PC-9 (cell line): ENCODE measurements at regions of chr11 and their contacts with region 1.

Region 1: DNA sequence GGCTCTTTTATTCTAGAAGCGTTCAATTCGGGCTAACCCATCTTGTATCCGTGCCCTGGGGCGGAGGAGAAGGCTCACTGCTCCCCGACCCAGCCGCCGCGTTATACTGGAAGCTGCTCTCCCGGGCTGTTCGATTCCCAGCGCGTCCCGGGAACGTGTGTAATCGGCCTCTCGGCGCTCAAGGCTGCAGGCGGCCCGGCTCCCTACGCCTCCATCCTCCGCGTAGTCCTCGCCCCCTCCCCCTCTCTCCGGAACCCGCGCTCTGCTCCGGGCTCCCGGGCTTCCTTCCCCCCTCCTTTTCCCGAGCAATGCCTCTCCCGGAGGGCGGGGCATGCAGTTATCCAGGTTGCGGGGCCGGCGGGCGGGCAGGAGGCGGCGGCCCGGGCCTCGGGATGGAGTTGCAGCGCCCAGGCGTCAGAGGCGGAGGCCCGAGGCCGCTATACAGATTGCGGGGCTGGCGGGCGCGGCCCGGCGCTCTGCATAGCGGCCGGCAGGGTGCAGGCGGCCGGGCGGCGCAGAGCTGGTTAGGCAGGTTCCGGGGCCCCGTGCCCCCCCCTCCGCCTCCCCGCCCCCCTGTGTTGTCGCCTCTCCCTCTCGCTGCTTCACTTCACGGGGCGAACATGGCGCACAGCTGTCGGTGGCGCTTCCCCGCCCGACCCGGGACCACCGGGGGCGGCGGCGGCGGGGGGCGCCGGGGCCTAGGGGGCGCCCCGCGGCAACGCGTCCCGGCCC is at the start of gene KMT2A:
- DNase-seq: peak; percentile 90 to 98
- H3K4me3 ChIP-seq: peak within 1 kb of the TSS; percentile 69
- H3K27ac ChIP-seq: peak within 1 kb of the TSS; percentile 60
- H3K4me1 ChIP-seq: peaks cover 41% of the 10 kb centered on the region
- H3K27me3 ChIP-seq: no peaks in the 10 kb centered on the region
- CTCF ChIP-seq: no peak
- total RNA-seq, gene KMT2A: 78.7 and 80.3 TPM in 2 replicates

Region 2: GRCh38 chr11:118088477-118088920 is 347.6 kb before region 1 on chr11:
- CTCF ChIA-PET with region 1: no interaction called
- POLR2A ChIA-PET with region 1: no interaction called
- intact Hi-C with region 1: no loop called
- DNase-seq: peak; percentile 46 to 89
- H3K4me3 ChIP-seq: no peak overlapping the region
- H3K27ac ChIP-seq: no peak overlapping the region
- H3K4me1 ChIP-seq: peaks cover 21% of the 10 kb centered on the region
- H3K27me3 ChIP-seq: no peaks in the 10 kb centered on the region
- CTCF ChIP-seq: no peak

Region 3: DNA sequence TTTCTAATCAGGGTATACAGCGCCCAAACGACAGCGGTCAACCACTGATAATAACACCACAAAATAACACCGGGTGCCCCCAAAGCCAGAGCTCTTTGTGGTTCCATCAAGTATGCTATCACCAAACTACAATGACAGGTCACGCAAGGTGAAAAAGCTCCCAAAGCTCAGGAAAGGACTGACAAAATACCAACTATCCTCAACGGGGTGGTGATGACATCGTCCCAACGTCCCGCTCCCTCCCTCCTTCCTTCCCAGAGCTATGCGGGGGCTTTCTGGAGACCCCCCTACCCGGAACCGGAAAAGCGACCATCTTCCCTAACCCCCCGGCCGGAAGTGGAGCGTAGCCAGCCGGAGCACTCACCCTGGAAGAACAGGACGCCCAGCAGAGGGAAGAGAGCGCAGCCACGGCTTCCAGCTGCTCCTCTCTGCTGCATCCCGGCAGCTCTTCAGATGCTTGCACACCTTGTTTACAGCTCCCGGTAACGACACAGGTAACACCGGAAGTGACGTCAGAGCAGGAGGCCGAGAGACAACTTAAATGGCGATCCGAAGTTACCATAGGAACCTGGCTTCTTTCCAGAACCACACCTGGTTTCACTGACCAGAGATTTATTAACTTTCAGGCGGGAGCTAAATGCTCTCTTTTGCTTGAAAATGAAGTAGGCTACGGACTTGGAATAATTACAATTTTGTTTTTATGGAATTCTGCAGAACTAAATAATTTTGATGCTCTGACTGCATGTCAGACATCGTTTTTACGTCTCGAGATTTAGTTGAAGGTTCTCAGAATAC is 184.0 kb before region 1 on chr11 and contains the start of gene MPZL3:
- CTCF ChIA-PET with region 1: no interaction called
- POLR2A ChIA-PET with region 1: no interaction called
- intact Hi-C with region 1: loop called (anchors 1 kb)
- DNase-seq: peak; percentile 86 to 99
- H3K4me3 ChIP-seq: peak within 1 kb of the TSS; percentile 72
- H3K27ac ChIP-seq: peak within 1 kb of the TSS; percentile 88
- H3K4me1 ChIP-seq: peaks cover 32% of the 10 kb centered on the region
- H3K27me3 ChIP-seq: no peaks in the 10 kb centered on the region
- CTCF ChIP-seq: 0 out of 2 replicates have a peak, but pooled peaks have one; percentile 2
- total RNA-seq, gene MPZL3: 13.4 and 16.8 TPM in 2 replicates

Region 4: DNA sequence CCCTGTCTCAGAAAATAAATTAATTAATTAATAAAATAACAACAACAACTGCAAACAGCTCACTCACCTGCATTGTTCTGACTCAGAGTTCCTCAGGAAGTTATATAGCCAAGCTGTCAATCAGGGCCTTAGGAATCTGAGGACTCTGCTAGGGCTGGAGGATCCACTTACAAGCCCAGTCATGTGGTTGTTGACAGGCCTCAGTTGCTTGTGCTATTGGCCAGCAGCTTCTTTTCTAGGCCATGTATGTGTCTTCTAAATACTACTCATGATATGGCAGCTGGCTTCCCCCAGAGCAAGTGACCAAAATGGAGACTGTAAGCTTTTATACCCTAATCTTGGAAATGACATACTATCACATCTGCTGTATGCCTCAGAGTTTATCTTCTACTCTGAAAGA is 55.5 kb before region 1 on chr11:
- CTCF ChIA-PET with region 1: interaction called, 14 read pairs
- POLR2A ChIA-PET with region 1: no interaction called
- intact Hi-C with region 1: no loop called
- DNase-seq: no peak
- H3K4me3 ChIP-seq: no peak overlapping the region
- H3K27ac ChIP-seq: no peak overlapping the region
- H3K4me1 ChIP-seq: no peaks in the 10 kb centered on the region
- H3K27me3 ChIP-seq: no peaks in the 10 kb centered on the region
- CTCF ChIP-seq: no peak

Region 5: GRCh38 chr11:118401151-118401878 is 34.7 kb before region 1 on chr11 and contains the start of gene ATP5MG:
- CTCF ChIA-PET with region 1: interaction called, 18 read pairs
- POLR2A ChIA-PET with region 1: no interaction called
- intact Hi-C with region 1: loop called (anchors 1 kb)
- DNase-seq: peak; percentile 81 to 82
- H3K4me3 ChIP-seq: peak within 1 kb of the TSS; percentile 83
- H3K27ac ChIP-seq: peak within 1 kb of the TSS; percentile 45
- H3K4me1 ChIP-seq: peaks cover 21% of the 10 kb centered on the region
- H3K27me3 ChIP-seq: no peaks in the 10 kb centered on the region
- CTCF ChIP-seq: no peak
- total RNA-seq, gene ATP5MG: 240 and 248 TPM in 2 replicates

Region 6: DNA sequence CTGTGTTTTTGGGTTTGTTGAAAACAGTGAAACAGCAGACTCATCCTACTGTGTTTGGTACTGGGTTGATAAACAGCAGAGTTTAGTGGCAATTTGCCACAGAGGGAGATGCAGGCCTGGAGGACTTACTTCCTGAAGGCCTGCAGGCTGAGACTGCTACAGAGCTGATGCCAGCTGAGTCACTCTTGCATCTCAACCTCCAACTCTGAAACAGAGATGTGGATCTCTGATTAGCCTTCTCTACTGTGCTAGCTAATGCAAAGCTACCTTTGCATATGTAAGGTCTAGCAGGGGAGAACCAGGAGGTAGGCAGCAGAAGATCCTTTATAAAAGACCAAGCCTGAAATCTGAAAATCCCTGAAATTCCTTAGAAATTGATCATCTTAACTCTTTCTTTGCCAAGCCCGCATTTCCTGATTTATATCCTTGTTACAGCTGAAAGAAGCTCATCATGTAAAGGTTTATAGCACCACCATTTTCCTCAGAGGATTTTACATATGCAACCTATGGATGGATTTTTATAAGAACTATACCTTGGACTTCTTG is 20.2 kb before region 1 on chr11:
- CTCF ChIA-PET with region 1: no interaction called
- POLR2A ChIA-PET with region 1: no interaction called
- intact Hi-C with region 1: loop called (anchors 2 kb)
- DNase-seq: peak; percentile 71 to 97
- H3K4me3 ChIP-seq: no peak overlapping the region
- H3K27ac ChIP-seq: peak overlapping the region; percentile 47
- H3K4me1 ChIP-seq: peaks cover 32% of the 10 kb centered on the region
- H3K27me3 ChIP-seq: no peaks in the 10 kb centered on the region
- CTCF ChIP-seq: no peak